Panc1 (cell line): ENCODE measurements at regions of chr3 and their contacts with region 1.

Region 1: GRCh38 chr3:105375750-105376511 is 9.2 kb downstream of the ALCAM start:
- DNase-seq: no peak
- ATAC-seq: no peak
- H3K4me3 ChIP-seq: no peak overlapping the region
- H3K27ac ChIP-seq: peak overlapping the region; percentile 1; the same call in 1 of the 2 replicates
- H3K4me1 ChIP-seq: no peaks in the 10 kb centered on the region; the same call in 1 of the 2 replicates
- H3K27me3 ChIP-seq: no peaks in the 10 kb centered on the region
- CTCF ChIP-seq: no peak

Region 2: GRCh38 chr3:103440539-103441203 is 1935.3 kb before region 1 on chr3:
- CTCF ChIA-PET with region 1: no interaction called
- POLR2A ChIA-PET with region 1: interaction called, 16 read pairs
- in situ Hi-C with region 1: no loop called
- intact Hi-C with region 1: no loop called
- DNase-seq: no peak
- ATAC-seq: no peak
- H3K4me3 ChIP-seq: no peak overlapping the region
- H3K27ac ChIP-seq: no peak overlapping the region
- H3K4me1 ChIP-seq: no peaks in the 10 kb centered on the region
- H3K27me3 ChIP-seq: no peaks in the 10 kb centered on the region
- CTCF ChIP-seq: peak; percentile 24; the same call in 1 of the 2 replicates

Region 3: DNA sequence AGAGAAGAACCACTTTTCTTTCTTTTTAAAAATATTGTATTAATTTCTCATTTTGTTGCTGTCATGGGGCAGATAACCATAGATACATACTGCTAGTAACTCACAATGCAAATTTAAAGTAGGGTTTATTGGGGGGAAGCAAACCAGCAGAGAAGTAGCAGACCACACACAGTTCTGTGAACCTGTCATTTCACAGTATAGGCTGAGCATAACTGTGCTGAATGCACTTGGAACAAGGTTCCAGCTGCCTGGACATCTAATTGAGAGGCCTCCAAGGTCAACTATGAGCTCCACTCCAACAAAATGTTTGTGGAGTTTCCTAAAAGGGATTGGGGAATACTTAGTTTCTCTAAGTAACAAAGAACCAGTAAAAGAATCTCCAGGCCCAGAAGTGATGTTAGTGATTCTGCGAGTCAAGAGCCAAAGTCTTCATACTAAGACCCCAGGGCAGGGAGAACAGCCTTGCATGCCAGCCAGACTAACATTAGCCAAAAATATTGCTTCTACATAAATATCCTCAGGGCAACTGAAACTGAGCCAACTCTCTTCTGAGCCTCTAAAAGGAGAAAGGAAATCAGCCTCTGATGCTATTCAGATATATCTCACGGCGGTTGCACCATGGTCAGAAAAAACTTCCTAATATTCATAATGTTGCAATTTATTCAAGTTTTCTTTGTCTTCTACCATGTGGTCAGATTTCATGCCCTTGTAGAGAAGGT is 865.6 kb before region 1 on chr3:
- CTCF ChIA-PET with region 1: no interaction called
- POLR2A ChIA-PET with region 1: no interaction called
- in situ Hi-C with region 1: no loop called
- intact Hi-C with region 1: no loop called
- DNase-seq: no peak
- ATAC-seq: no peak
- H3K4me3 ChIP-seq: no peak overlapping the region
- H3K27ac ChIP-seq: no peak overlapping the region
- H3K4me1 ChIP-seq: no peaks in the 10 kb centered on the region; the same call in 1 of the 2 replicates
- H3K27me3 ChIP-seq: no peaks in the 10 kb centered on the region
- CTCF ChIP-seq: no peak

Region 4: DNA sequence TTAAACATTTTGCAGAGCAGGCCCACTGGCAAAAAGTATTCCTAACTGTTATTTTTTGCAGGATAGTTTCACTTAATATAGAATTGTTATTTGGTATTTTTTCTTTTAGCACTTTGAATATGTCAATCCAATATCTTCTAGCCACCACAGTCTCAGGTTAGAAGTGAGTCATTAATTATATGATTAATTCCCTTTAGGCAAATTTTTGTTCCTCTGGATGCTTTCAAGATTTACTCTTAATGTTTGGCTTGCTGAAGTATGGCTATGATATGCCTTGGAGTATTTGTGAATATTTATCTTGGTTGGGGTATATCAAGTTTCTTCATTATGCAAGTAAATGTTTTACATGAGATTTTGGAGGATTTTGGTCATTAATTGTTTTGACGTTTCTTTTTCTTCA is 161.4 kb before region 1 on chr3:
- CTCF ChIA-PET with region 1: no interaction called
- POLR2A ChIA-PET with region 1: no interaction called
- in situ Hi-C with region 1: no loop called
- intact Hi-C with region 1: no loop called
- DNase-seq: no peak
- ATAC-seq: no peak
- H3K4me3 ChIP-seq: no peak overlapping the region
- H3K27ac ChIP-seq: no peak overlapping the region
- H3K4me1 ChIP-seq: no peaks in the 10 kb centered on the region
- H3K27me3 ChIP-seq: no peaks in the 10 kb centered on the region
- CTCF ChIP-seq: no peak

Region 5: DNA sequence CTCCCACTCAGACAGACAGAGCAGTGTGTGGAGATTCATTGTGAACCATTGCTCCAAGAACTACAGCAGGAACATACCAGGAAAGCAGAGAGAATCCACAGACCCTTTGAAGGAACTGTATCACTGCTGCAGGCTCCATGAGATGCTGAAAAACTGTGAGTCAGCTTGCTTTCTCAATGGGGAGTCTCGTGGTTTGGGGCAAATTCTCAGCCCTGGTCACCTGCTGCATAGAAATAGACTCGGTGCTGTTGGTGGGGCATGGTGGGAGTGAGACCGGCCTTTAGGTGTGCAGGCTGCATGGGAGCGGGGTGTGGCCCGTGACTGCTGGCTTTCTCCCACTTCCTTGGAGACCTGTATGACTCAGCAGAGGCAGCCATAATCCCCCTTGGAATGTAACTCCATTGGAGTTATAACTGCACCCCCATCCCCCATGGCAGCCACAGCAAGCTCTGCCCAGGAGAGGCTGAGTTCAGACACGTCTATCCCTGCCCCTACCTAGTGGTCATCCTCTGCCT is 26.4 kb after region 1 on chr3:
- CTCF ChIA-PET with region 1: no interaction called
- POLR2A ChIA-PET with region 1: interaction called, 13 read pairs
- in situ Hi-C with region 1: no loop called
- intact Hi-C with region 1: no loop called
- DNase-seq: no peak
- ATAC-seq: peak; percentile 75
- H3K4me3 ChIP-seq: peak overlapping the region in 1 of 2 experiments; percentile 27; a peak in 2 of 4 replicates
- H3K27ac ChIP-seq: peak overlapping the region; percentile 17; the same call in 1 of the 2 replicates
- H3K4me1 ChIP-seq: peaks cover 3% of the 10 kb centered on the region; the same call in 1 of the 2 replicates
- H3K27me3 ChIP-seq: no peaks in the 10 kb centered on the region
- CTCF ChIP-seq: no peak